OCI-LY7 (cell line): ENCODE measurements at regions of chr12 and their contacts with region 1.

Region 1: DNA sequence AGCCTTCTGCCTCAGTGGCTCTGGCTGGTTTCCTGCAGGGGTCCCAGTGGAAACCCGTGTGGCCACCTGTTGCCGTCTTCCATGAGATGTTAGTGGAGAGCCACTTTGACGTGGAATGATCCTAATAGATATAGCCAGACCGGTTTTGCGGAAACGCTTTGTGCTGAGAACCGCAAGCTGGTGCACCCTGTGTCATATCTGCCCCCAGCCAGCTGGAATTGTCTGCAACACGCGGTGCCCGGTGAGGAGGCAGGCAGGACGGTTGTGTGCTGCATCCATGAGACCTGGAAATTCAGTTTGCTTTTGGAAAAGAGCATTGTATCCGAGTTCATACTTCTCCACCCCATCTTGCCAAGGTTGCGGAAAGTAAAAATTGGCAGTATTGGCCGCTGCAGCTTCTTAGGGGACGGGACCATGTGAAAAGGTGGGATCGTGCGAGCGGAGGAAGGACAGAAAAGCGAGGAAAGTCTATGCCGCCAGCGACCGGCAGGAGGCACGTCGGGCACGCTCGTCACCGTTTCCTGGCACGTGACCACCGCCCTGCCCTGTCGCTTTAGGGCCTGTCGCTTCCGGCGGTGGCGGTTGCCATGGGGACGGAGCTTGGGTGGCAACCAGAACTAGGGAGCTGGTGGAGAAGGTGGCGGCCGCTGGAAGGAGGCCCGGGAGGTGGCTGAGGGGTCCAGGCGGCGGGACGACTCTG is at the start of gene CFAP251:
- DNase-seq: peak; percentile 96
- H3K4me3 ChIP-seq: peak within 1 kb of the TSS; percentile 69
- H3K27ac ChIP-seq: peak within 1 kb of the TSS; percentile 45
- H3K4me1 ChIP-seq: peaks cover 37% of the 10 kb centered on the region
- CTCF ChIP-seq: peak; percentile 75
- total RNA-seq, gene CFAP251: 4.1 and 6.6 TPM in 2 replicates

Region 2: DNA sequence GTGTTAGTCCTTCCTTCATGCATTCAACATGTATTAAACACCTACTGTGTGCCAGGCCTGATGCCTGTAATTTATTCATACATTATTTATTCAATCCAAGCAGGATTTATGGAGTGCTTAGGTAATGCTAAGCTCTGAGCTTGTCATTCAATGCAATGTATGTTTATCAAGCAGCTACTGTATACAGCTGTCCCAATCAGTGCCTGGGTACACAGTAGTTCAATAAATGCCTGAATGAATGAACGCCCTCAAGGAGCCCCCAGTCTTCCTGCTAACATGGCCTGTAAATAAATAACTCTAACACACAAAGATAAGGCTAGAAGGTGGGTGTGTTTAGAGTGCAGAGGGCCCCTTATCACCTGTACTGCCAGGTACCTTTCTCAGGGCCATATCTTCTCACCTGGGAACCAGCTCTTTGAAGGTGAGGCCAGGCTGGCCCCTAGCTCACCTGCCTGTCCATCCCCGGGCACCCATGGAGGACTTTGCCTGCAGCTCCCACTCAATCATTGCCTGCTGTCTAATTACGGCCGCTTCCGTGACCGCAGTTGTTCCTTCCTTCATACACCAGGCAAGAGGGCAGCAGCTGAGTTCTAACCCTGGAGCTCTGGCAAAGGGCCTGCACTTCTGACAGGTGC is 317.3 kb before region 1 on chr12:
- CTCF ChIA-PET with region 1: no interaction called
- POLR2A ChIA-PET with region 1: no interaction called
- intact Hi-C with region 1: no loop called
- DNase-seq: no peak
- H3K4me3 ChIP-seq: no peak overlapping the region
- H3K27ac ChIP-seq: no peak overlapping the region
- H3K4me1 ChIP-seq: no peaks in the 10 kb centered on the region
- CTCF ChIP-seq: no peak

Region 3: DNA sequence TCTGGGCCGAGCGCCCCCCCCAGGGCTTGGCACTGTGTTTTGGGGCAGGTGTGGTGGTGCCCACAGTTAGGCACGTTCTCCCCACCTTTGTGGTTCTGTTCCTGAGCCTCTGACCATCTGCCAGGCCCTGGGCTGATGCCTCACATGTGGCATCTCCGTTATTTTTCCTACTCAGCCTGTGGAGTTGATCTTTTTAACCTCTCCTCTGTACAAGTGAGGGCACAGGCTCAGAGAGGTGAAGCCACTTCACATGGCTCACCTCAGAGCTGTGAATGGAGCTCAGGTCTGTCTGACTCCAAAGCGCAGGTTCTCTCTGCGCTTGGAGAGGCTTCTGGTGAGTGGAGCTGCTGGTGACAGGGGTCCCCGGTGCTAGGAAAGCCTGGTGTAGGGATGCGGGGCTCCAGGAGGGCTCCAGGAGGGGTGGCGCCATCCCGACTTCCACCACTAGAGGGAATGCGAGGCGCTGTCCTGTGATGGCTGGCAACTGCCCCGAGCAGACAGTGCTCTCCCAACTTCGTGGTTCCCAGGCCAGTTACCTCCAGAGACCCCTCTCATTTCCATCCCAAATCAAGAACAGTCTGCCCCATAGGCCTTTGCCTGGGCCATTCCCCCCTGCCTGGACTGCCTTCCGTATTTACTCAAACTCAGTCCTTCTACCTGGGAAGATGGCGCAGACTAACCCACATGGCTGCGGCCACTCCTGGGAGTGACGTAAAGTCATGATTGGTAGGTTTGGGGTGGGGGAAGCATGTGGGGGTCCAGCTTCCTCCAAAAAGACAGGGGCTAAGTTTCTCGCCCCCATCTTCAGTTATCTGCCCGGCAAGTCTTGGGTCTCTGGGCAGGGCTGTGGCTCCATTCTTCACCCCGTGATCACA is 113.5 kb after region 1 on chr12:
- CTCF ChIA-PET with region 1: interaction called, 3 read pairs
- POLR2A ChIA-PET with region 1: interaction called, 11 read pairs
- intact Hi-C with region 1: loop called (anchors 1 kb)
- DNase-seq: peak; percentile 49
- H3K4me3 ChIP-seq: peak overlapping the region; percentile 33
- H3K27ac ChIP-seq: peak overlapping the region; percentile 94
- H3K4me1 ChIP-seq: peaks cover 64% of the 10 kb centered on the region
- CTCF ChIP-seq: peak; percentile 81

Region 4: GRCh38 chr12:122051231-122051876 is 133.2 kb after region 1 on chr12:
- CTCF ChIA-PET with region 1: no interaction called
- POLR2A ChIA-PET with region 1: no interaction called
- intact Hi-C with region 1: loop called (anchors 1 kb)
- DNase-seq: no peak
- H3K4me3 ChIP-seq: no peak overlapping the region
- H3K27ac ChIP-seq: no peak overlapping the region
- H3K4me1 ChIP-seq: no peaks in the 10 kb centered on the region
- CTCF ChIP-seq: no peak

Region 5: DNA sequence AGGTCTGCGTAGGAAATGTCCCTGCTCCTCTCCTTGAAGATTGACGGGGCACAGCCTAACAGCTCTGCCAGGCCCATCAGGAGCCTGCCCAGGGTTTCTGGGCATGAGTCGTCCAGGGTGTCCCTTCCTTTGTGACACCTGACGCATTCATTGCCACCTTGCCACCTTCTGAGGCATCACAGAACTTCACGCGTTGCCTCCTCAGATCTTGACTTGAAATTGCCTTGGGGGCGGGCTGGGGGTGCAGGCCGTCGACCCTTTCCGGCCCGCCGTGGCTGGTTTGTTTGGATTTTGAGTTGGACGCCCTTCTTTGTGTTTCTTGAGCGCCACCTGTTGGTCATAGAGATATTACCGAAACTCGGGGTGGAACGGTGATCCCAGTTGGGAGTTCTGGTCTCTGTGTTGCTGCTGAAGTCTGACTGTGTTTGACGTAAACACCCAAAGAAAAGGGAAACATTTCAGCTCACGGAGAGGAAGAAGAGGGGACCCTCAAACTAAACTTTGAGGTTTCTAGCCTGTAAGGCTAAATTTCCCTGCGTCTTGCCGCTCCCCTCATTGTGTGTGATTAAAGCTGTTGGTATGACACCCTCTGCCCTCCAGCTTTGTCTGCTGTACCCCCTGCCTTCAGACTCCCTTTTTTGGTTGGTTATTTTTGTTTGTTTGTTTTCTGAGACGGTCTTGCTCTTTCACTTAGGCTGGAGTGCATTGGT is 205.1 kb after region 1 on chr12:
- CTCF ChIA-PET with region 1: no interaction called
- POLR2A ChIA-PET with region 1: no interaction called
- intact Hi-C with region 1: loop called (anchors 1 kb)
- DNase-seq: peak; percentile 78
- H3K4me3 ChIP-seq: no peak overlapping the region
- H3K27ac ChIP-seq: no peak overlapping the region
- H3K4me1 ChIP-seq: peaks cover 7% of the 10 kb centered on the region
- CTCF ChIP-seq: peak; percentile 94

Region 6: GRCh38 chr12:122190842-122191668 is 272.9 kb after region 1 on chr12:
- CTCF ChIA-PET with region 1: interaction called, 3 read pairs
- POLR2A ChIA-PET with region 1: no interaction called
- intact Hi-C with region 1: loop called (anchors 5 kb)
- DNase-seq: peak; percentile 79
- H3K4me3 ChIP-seq: no peak overlapping the region
- H3K27ac ChIP-seq: no peak overlapping the region
- H3K4me1 ChIP-seq: no peaks in the 10 kb centered on the region
- CTCF ChIP-seq: peak; percentile 92